ENCODE measurements at regions of chr22 and their contacts with region 1.

Region 1: GRCh38 chr22:36470162-36470993 is 11.1 kb downstream of the TXN2 start:
- H3K4me3 ChIP-seq: no peak overlapping the region
- H3K27ac ChIP-seq: no peak overlapping the region
- H3K4me1 ChIP-seq: peaks cover 14% of the 10 kb centered on the region
- CTCF ChIP-seq: peak; percentile 87

Region 2: DNA sequence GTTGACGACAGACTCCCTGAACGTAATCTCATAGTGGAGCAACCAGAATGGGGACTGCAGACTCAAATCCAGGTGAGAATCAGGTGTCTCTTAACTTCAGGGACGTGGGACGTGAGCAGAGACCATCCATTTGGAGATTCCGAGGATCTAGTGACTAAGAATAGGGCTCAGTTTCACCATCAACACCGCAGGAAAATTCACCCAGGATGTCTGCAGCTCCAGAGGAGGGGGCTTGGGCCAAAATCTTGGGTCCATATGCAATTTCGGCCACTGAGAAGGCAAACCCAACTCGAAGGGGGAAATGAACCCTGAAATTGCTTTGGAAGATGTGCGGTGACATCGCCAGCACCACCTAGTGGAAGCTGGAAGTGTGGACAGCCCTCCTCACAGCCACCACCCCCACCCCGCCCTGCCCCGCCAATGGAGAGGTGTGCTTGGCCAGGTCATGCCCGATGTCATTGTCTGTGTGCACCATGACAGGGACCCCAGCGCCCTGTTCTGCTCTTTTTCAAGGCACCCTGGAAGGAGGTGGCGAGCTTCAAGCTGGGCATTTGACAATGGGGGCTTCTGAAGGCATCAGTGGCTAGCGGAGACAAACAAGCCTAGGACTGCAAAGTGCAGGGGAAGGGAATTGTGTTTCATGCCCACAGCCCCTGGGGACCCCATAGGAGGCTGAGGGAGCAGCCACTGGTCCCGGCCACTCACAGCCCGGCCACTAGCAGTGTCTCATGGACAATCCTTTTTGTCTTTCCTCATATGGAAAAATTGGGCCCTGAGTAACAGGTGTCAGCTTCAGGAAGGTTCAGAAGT is 192.7 kb before region 1 on chr22:
- CTCF ChIA-PET with region 1: interaction called, 10 read pairs
- POLR2A ChIA-PET with region 1: no interaction called
- H3K4me3 ChIP-seq: no peak overlapping the region
- H3K27ac ChIP-seq: no peak overlapping the region; the same call in 1 of the 2 replicates
- H3K4me1 ChIP-seq: no peaks in the 10 kb centered on the region
- CTCF ChIP-seq: peak; percentile 54

Region 3: GRCh38 chr22:36311386-36312358 is 158.7 kb before region 1 on chr22:
- CTCF ChIA-PET with region 1: interaction called, 12 read pairs
- POLR2A ChIA-PET with region 1: no interaction called
- H3K4me3 ChIP-seq: no peak overlapping the region
- H3K27ac ChIP-seq: no peak overlapping the region
- H3K4me1 ChIP-seq: no peaks in the 10 kb centered on the region
- CTCF ChIP-seq: no peak

Region 4: DNA sequence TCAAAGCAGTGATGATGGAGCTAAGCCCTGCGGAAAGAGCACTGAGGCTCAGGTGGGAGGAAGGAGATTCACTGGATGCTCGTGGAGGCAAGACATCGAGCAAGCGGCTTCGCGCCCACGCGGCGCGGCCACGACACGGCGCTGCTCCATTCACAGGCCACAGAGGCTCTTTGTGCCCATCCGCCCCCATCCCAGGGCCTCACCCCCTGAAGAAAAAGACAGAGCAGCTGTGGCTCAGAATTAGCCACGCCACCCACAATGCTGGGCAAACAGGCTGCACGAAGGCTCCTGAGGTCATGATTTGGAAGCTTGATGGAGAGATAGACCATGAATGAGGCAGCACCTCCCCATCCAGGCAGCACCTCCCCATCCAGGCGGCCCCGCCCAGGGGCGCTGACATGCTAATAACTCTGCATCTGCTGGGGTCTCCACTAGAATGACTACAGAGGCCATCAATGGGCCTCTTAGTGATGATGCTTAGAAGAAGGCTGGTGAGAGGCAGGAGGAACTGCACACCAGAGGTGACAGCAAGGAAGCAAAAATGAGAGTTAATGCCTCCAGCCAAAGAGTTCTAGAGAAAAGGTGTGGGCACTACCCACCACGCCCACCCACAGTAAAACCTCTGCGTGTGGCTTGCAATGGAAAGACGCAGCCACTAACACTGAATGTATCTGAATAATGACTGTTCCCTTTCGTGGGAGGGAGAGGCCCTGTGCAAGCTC is 126.1 kb before region 1 on chr22:
- CTCF ChIA-PET with region 1: interaction called, 11 read pairs
- POLR2A ChIA-PET with region 1: interaction called, 8 read pairs
- H3K4me3 ChIP-seq: no peak overlapping the region
- H3K27ac ChIP-seq: no peak overlapping the region
- H3K4me1 ChIP-seq: no peaks in the 10 kb centered on the region
- CTCF ChIP-seq: no peak

Region 5: GRCh38 chr22:36365020-36365411 is 105.4 kb before region 1 on chr22:
- CTCF ChIA-PET with region 1: interaction called, 17 read pairs
- POLR2A ChIA-PET with region 1: interaction called, 4 read pairs
- H3K4me3 ChIP-seq: no peak overlapping the region
- H3K27ac ChIP-seq: no peak overlapping the region
- H3K4me1 ChIP-seq: peaks cover 57% of the 10 kb centered on the region
- CTCF ChIP-seq: no peak

Region 6: GRCh38 chr22:36454916-36455570 is 15.3 kb before region 1 on chr22:
- CTCF ChIA-PET with region 1: interaction called, 11 read pairs
- POLR2A ChIA-PET with region 1: interaction called, 12 read pairs
- H3K4me3 ChIP-seq: peak overlapping the region; percentile 40
- H3K27ac ChIP-seq: peak overlapping the region; percentile 63
- H3K4me1 ChIP-seq: peaks cover 13% of the 10 kb centered on the region
- CTCF ChIP-seq: peak; percentile 83

Region 7: GRCh38 chr22:36486619-36487384 is 16.4 kb after region 1 on chr22:
- CTCF ChIA-PET with region 1: interaction called, 12 read pairs
- POLR2A ChIA-PET with region 1: interaction called, 15 read pairs
- H3K4me3 ChIP-seq: no peak overlapping the region
- H3K27ac ChIP-seq: no peak overlapping the region
- H3K4me1 ChIP-seq: no peaks in the 10 kb centered on the region; the same call in 1 of the 2 replicates
- CTCF ChIP-seq: peak; percentile 79